ENCODE measurements at regions of chr6 and their contacts with region 1.

Region 1: DNA sequence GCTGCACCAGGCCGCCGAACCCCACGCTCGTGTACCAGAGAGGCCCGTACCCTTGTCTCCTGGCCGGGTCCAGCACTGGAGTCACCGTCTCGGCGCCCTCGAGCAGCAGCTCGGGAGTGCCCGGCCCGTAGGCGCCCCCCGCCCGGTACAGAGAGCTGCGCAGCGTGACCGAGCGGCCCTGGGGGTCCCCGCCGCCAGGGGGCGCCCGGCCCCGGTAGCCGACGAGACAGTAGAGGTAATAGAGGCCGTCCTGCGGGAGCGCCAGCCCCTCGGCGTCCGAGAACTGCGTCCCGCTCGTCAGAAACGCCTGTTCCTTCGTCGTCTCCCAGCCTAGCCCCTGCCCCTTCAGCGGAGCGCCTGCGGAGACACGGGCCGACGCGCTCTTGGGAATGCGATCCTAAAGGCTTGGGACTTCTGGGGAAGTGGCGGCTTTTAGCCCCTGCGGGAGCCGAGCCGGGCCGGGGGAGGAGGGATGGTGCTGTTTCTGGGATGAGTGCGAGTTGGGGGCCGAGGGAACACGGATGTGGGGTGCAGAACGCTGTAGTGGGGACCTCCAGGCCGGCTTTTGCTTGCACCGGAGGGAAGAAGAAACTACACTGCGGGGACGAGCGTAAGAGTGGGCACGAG is 1.3 kb downstream of the LTB start:
- DNase-seq: peak; percentile 81
- H3K4me3 Mint-ChIP-seq: peak overlapping the region; percentile 92
- H3K27ac Mint-ChIP-seq: peak overlapping the region; percentile 93
- H3K4me1 Mint-ChIP-seq: peaks cover 63% of the 10 kb centered on the region
- H3K27me3 Mint-ChIP-seq: no peaks in the 10 kb centered on the region

Region 2: GRCh38 chr6:31541658-31542521 is 39.0 kb before region 1 on chr6 and contains the start of gene DDX39B:
- intact Hi-C with region 1: loop called (anchors 1 kb)
- DNase-seq: peak; percentile 92
- H3K4me3 Mint-ChIP-seq: peak within 1 kb of the TSS; percentile 100
- H3K27ac Mint-ChIP-seq: peak within 1 kb of the TSS; percentile 97
- H3K4me1 Mint-ChIP-seq: peaks cover 41% of the 10 kb centered on the region
- H3K27me3 Mint-ChIP-seq: peaks cover 3% of the 10 kb centered on the region
- total RNA-seq, gene DDX39B: 628 and 637 TPM in 2 replicates

Region 3: GRCh38 chr6:31568537-31568961 is 12.4 kb before region 1 on chr6:
- intact Hi-C with region 1: loop called (anchors 1 kb)
- DNase-seq: peak; percentile 79
- H3K4me3 Mint-ChIP-seq: peak overlapping the region; percentile 72
- H3K27ac Mint-ChIP-seq: peak overlapping the region; percentile 63
- H3K4me1 Mint-ChIP-seq: peaks cover 82% of the 10 kb centered on the region
- H3K27me3 Mint-ChIP-seq: peaks cover 11% of the 10 kb centered on the region

Region 4: GRCh38 chr6:31597006-31597405 is 16.1 kb after region 1 on chr6:
- intact Hi-C with region 1: loop called (anchors 1 kb)
- DNase-seq: no peak
- H3K4me3 Mint-ChIP-seq: no peak overlapping the region
- H3K27ac Mint-ChIP-seq: no peak overlapping the region
- H3K4me1 Mint-ChIP-seq: peaks cover 52% of the 10 kb centered on the region
- H3K27me3 Mint-ChIP-seq: no peaks in the 10 kb centered on the region

Region 5: DNA sequence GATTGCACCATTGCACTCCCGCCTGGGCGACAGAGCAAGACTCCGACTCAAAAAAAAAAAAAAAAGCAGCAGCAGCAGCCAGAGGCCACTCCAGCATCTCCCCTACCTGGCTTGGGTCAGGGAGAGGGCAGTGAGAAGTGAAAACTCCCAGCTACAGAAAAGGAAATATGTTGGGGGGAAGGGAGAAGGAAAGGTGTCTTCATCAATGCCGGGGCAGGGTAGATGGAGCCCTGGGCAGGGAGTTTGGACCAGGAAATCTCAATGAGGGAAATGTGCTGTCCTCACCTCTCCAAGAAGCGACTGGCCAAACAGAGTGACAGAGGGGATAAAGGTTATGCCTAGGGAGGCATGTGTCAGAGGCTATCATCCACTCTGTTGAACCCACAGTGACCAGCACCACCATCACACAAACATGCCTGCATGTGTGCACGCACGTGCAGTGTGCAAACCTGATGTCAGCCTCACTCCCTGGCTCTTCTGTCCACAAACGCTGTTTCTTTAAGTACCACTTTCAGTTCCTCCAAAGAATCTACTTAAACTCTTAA is 33.2 kb after region 1 on chr6:
- intact Hi-C with region 1: no loop called
- DNase-seq: no peak
- H3K4me3 Mint-ChIP-seq: no peak overlapping the region
- H3K27ac Mint-ChIP-seq: no peak overlapping the region
- H3K4me1 Mint-ChIP-seq: peaks cover 28% of the 10 kb centered on the region
- H3K27me3 Mint-ChIP-seq: no peaks in the 10 kb centered on the region